ENCODE measurements at regions of chr17 and their contacts with region 1.

Region 1: DNA sequence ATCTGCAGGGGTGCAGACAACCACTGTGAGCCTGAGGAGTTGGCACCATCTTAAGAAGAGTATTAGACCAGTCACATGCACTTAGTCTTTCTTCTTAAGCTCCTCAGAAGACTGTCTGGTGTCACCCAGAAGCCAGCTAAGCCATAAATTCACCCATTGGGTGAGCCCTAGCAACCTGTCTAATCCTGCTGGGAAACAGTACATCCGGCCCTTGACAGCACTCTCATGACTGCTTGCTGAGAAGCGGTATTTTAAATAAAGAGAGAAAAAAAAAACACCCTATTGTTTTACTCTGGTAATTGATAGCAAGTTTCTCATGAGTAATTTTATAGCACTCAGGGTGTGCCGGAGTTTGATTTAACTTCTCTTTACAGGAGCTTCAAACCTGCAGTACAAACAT is 134.7 kb downstream of the SOX9 start:
- DNase-seq: no peak
- ATAC-seq: no peak
- H3K4me3 ChIP-seq: no peak overlapping the region
- H3K27ac ChIP-seq: no peak overlapping the region
- H3K4me1 ChIP-seq: no peaks in the 10 kb centered on the region; the same call in 1 of the 2 replicates
- H3K27me3 ChIP-seq: peaks cover 0 to 13% of the 10 kb centered on the region in 2 experiments; a peak in 2 of 5 replicates
- CTCF ChIP-seq: no peak
- EP300 ChIP-seq: no peak
- POLR2A ChIP-seq: no peak
- RAD21 ChIP-seq: no peak

Region 2: GRCh38 chr17:72236915-72237633 is 18.4 kb before region 1 on chr17:
- CTCF ChIA-PET with region 1: no interaction called
- POLR2A ChIA-PET with region 1: interaction called, 3 read pairs
- in situ Hi-C with region 1: no loop called
- intact Hi-C with region 1: loop called (anchors 1 kb)
- DNase-seq: no peak
- ATAC-seq: peak; percentile 41; the same call in 2 of the 3 replicates
- H3K4me3 ChIP-seq: no peak overlapping the region
- H3K27ac ChIP-seq: no peak overlapping the region
- H3K4me1 ChIP-seq: peaks cover 18% of the 10 kb centered on the region
- H3K27me3 ChIP-seq: peaks cover 4 to 26% of the 10 kb centered on the region in 2 experiments; a peak in 4 of 5 replicates
- CTCF ChIP-seq: no peak
- EP300 ChIP-seq: no peak
- POLR2A ChIP-seq: no peak
- RAD21 ChIP-seq: no peak

Region 3: DNA sequence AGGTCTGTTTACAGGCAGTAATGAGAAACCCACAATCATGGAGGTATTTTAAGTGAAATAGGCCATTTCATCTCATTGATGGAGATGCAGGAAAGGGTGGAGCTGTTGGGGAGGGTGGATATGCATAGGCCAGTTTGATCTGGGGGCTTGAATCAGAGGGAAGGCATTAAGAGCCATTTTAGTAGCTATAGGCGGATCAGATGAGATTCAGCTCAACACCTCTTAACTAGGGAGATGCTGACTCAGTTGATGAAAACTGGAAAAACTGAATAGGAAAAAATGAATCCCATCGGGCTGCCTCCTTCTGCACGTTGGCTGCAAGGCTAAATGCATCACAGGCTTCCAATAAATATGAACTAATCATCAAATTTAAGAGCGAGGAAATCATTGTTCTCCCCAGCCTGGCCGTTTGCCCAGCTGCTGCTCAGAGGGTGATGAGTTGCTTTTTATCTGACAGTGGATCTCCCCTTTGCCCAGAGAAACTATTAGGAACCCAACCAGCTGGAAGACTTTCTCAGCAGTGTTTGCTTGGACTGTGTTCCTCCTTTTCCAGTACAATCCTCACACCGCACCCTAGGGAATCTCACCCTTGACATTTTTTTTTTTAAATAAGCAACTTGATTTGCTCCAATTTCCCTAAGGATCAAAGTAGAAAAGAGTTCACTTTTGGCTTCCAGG is 14.9 kb after region 1 on chr17:
- CTCF ChIA-PET with region 1: no interaction called
- POLR2A ChIA-PET with region 1: no interaction called
- in situ Hi-C with region 1: no loop called
- intact Hi-C with region 1: no loop called
- DNase-seq: no peak
- ATAC-seq: no peak
- H3K4me3 ChIP-seq: no peak overlapping the region
- H3K27ac ChIP-seq: no peak overlapping the region
- H3K4me1 ChIP-seq: peaks cover 18% of the 10 kb centered on the region
- H3K27me3 ChIP-seq: peaks cover 0 to 47% of the 10 kb centered on the region in 2 experiments; a peak in 3 of 5 replicates
- CTCF ChIP-seq: no peak
- EP300 ChIP-seq: no peak
- POLR2A ChIP-seq: no peak
- RAD21 ChIP-seq: no peak

Region 4: GRCh38 chr17:72287586-72287985 is 32.1 kb after region 1 on chr17:
- CTCF ChIA-PET with region 1: no interaction called
- POLR2A ChIA-PET with region 1: no interaction called
- in situ Hi-C with region 1: no loop called
- intact Hi-C with region 1: no loop called
- DNase-seq: no peak
- ATAC-seq: no peak
- H3K4me3 ChIP-seq: no peak overlapping the region
- H3K27ac ChIP-seq: no peak overlapping the region
- H3K4me1 ChIP-seq: peaks cover 17% of the 10 kb centered on the region
- H3K27me3 ChIP-seq: peaks cover 0 to 10% of the 10 kb centered on the region in 2 experiments; a peak in 2 of 5 replicates
- CTCF ChIP-seq: no peak
- EP300 ChIP-seq: no peak
- POLR2A ChIP-seq: no peak
- RAD21 ChIP-seq: no peak

Region 5: GRCh38 chr17:72465191-72466024 is 209.9 kb after region 1 on chr17:
- CTCF ChIA-PET with region 1: no interaction called
- POLR2A ChIA-PET with region 1: no interaction called
- in situ Hi-C with region 1: no loop called
- intact Hi-C with region 1: no loop called
- DNase-seq: peak; percentile 89
- ATAC-seq: peak; percentile 98
- H3K4me3 ChIP-seq: peak overlapping the region; percentile 7 to 64 (median 43); a peak in 5 of 6 replicates
- H3K27ac ChIP-seq: peak overlapping the region; percentile 70
- H3K4me1 ChIP-seq: peaks cover 98% of the 10 kb centered on the region
- H3K27me3 ChIP-seq: no peaks in the 10 kb centered on the region
- CTCF ChIP-seq: no peak
- EP300 ChIP-seq: peak; percentile 41 to 66; a peak in 2 of 4 replicates
- POLR2A ChIP-seq: peak in 1 of 2 experiments; percentile 48; a peak in 1 of 4 replicates
- RAD21 ChIP-seq: peak; percentile 12; the same call in 1 of the 2 replicates

Measured in HepG2 (cell line).